ENCODE measurements at regions of chr21 and their contacts with region 1.

Region 1: DNA sequence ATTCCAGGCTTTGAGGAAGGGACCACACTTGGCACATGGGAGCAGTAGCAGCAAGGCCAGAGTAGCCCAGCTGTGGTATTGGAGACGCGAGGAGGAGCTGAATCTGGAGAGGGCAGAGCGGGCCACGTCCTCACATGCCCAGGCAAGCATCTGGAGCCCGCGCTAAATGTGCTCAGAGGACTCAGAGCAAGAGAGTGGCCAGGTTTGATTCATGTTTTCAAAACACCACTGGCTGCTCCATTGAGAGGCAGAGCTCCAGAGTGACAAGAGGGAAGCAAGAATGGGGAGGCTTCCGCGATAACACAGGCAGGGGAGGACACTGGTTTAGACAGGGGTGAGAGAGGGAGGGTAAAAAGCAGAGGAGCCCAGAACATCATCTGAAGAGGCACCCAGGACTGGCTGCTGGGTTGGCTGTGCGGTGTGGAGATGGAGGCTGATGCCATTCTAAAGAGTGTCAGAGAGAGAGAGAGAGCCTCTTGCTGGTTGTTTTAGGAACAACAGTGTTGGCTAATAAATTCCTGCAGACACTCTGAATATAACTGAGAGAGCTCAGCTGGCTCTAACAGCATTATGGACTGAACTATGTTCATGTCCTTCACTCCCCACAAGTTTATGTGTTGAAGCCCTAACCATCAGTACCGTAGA is 32.3 kb downstream of the RCAN1 start:
- DNase-seq: no peak
- ATAC-seq: peak; percentile 95
- H3K4me3 Mint-ChIP-seq: no peak overlapping the region
- H3K27ac Mint-ChIP-seq: peak overlapping the region; percentile 81; the same call in 1 of the 2 replicates
- H3K4me1 Mint-ChIP-seq: peaks cover 10% of the 10 kb centered on the region; the same call in 1 of the 2 replicates
- H3K27me3 Mint-ChIP-seq: no peaks in the 10 kb centered on the region
- CTCF ChIP-seq: 0 out of 2 replicates have a peak, but pooled peaks have one; percentile 10

Region 2: DNA sequence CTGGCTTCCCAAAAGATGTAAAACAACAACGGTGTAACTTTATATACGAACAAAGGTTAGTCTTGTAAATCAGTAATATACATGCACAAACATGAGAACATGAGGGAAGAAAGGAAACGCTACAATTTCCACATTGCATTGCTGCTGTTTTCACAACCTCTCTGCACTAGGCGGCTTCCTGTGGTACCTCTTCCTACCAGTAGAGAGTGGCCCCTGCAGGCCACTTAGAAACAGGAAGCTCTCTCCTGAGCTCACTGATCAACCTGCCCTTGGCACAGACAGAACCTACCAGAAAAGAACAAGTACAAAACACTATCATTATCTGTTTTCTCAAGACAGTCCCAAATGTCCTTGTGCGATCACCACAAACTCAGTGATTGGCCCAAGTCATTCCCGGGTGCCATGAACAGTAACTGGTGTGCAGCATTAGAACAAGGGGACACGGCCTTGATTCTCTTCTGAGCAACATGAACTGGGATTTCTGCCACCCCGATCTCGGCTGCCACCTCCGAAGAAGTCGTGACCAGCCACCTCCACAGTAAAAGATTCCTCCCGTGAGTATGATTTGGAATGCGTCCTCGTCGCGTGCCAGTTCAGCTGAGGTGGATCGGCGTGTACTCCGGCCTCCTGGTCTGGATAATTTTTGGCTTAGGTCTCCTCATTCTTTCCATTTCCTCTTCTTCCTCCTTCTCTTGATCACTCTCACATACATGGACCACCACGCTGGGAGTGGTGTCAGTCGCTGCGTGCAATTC is 65.0 kb before region 1 on chr21:
- CTCF ChIA-PET with region 1: interaction called, 22 read pairs
- POLR2A ChIA-PET with region 1: no interaction called
- DNase-seq: no peak
- ATAC-seq: peak; percentile 94
- H3K4me3 Mint-ChIP-seq: no peak overlapping the region
- H3K27ac Mint-ChIP-seq: peak overlapping the region; percentile 48; the same call in 1 of the 2 replicates
- H3K4me1 Mint-ChIP-seq: peaks cover 34% of the 10 kb centered on the region
- H3K27me3 Mint-ChIP-seq: no peaks in the 10 kb centered on the region; the same call in 1 of the 2 replicates
- CTCF ChIP-seq: no peak

Region 3: GRCh38 chr21:34526618-34527290 is 55.9 kb before region 1 on chr21:
- CTCF ChIA-PET with region 1: interaction called, 14 read pairs
- POLR2A ChIA-PET with region 1: no interaction called
- DNase-seq: peak; percentile 42
- ATAC-seq: peak; percentile 53
- H3K4me3 Mint-ChIP-seq: peak overlapping the region; percentile 12; the same call in 1 of the 2 replicates
- H3K27ac Mint-ChIP-seq: peak overlapping the region; percentile 89
- H3K4me1 Mint-ChIP-seq: peaks cover 68% of the 10 kb centered on the region
- H3K27me3 Mint-ChIP-seq: peaks cover 6% of the 10 kb centered on the region
- CTCF ChIP-seq: no peak

Region 4: DNA sequence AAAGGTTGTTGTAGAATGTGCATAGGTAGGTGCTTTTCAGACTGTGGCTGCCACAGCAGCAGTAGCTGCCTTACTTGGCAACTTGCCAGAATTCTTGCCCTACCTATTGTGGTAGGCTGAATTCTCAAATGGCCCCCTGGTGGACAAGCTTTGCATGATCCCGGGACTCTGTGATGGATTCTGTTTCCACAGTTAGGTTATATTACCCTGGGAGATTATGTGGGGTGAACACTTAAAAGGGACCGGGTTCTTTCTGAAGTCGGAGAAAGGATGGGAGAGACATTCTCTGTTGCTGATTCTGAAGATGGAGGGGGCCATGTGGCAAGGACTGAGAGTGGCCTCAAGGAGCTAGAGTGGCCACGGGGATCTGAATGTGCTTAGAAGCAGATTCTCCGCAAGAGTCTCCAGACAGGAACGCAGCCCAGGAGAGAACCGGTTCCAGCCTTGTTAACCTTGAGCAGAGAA is 38.6 kb before region 1 on chr21:
- CTCF ChIA-PET with region 1: interaction called, 10 read pairs
- POLR2A ChIA-PET with region 1: no interaction called
- DNase-seq: peak; percentile 66
- ATAC-seq: peak; percentile 86
- H3K4me3 Mint-ChIP-seq: no peak overlapping the region
- H3K27ac Mint-ChIP-seq: no peak overlapping the region
- H3K4me1 Mint-ChIP-seq: peaks cover 9% of the 10 kb centered on the region
- H3K27me3 Mint-ChIP-seq: 0 out of 2 replicates have a peak, but pooled peaks cover 6% of the 10 kb centered on the region
- CTCF ChIP-seq: peak; percentile 58

Region 5: DNA sequence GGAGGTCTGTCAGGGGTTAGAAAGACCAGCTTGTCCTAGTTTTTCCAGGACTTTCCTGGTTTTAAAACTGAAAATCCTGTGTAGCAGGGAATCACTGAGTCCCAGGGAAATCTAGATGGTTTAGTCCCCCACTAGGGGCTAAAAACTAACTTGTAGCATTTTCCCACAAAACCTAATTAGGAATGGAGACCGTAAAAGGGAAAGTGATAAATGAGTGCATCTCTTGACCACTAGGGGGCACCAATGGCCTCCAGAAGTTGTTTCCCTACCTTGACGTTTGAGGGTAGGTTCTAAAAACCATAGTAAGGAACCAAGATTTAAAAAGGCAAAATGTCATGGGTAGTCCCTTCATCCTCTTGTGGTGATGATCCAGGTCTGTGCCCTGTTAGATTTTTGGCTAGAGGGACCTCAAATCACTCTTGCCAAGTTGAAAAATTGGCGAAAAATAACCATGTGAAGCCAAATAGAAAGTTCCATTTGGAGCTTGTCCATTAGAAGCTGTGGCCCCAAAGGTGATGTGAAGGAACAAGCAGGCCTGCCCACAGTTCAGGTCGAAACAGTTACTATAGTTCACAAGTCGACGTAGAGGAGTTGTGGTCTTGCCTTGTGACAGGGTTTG is 110.7 kb after region 1 on chr21:
- CTCF ChIA-PET with region 1: no interaction called
- POLR2A ChIA-PET with region 1: no interaction called
- DNase-seq: peak; percentile 40
- ATAC-seq: peak; percentile 60
- H3K4me3 Mint-ChIP-seq: no peak overlapping the region
- H3K27ac Mint-ChIP-seq: no peak overlapping the region
- H3K4me1 Mint-ChIP-seq: peaks cover 35% of the 10 kb centered on the region
- H3K27me3 Mint-ChIP-seq: peaks cover 3% of the 10 kb centered on the region; the same call in 1 of the 2 replicates
- CTCF ChIP-seq: peak; percentile 51

Measured in WTC11 (cell line).